Caco-2 (cell line): ENCODE measurements at regions of chr18 and their contacts with region 1.

Region 1: GRCh38 chr18:812376-813171 is 532 bp upstream of the YES1 start:
- DNase-seq: peak; percentile 90 to 94
- H3K4me3 ChIP-seq: peak overlapping the region; percentile 79
- H3K4me3 Mint-ChIP-seq: peak overlapping the region; percentile 96
- H3K27ac Mint-ChIP-seq: peak overlapping the region; percentile 94
- H3K4me1 ChIP-seq: 0 out of 2 replicates have a peak, but pooled peaks cover 4% of the 10 kb centered on the region
- H3K4me1 Mint-ChIP-seq: peaks cover 6% of the 10 kb centered on the region
- H3K27me3 ChIP-seq: no peaks in the 10 kb centered on the region
- H3K27me3 Mint-ChIP-seq: no peaks in the 10 kb centered on the region
- CTCF ChIP-seq: no peak

Region 2: GRCh38 chr18:741931-742512 is 70.6 kb before region 1 on chr18:
- CTCF ChIA-PET with region 1: no interaction called
- POLR2A ChIA-PET with region 1: no interaction called
- intact Hi-C with region 1: loop called (anchors 1 kb)
- DNase-seq: peak in 1 of 2 experiments; percentile 20
- H3K4me3 ChIP-seq: no peak overlapping the region
- H3K4me3 Mint-ChIP-seq: no peak overlapping the region
- H3K27ac Mint-ChIP-seq: no peak overlapping the region
- H3K4me1 ChIP-seq: no peaks in the 10 kb centered on the region
- H3K4me1 Mint-ChIP-seq: no peaks in the 10 kb centered on the region
- H3K27me3 ChIP-seq: no peaks in the 10 kb centered on the region
- H3K27me3 Mint-ChIP-seq: no peaks in the 10 kb centered on the region
- CTCF ChIP-seq: peak; percentile 69 to 80

Region 3: DNA sequence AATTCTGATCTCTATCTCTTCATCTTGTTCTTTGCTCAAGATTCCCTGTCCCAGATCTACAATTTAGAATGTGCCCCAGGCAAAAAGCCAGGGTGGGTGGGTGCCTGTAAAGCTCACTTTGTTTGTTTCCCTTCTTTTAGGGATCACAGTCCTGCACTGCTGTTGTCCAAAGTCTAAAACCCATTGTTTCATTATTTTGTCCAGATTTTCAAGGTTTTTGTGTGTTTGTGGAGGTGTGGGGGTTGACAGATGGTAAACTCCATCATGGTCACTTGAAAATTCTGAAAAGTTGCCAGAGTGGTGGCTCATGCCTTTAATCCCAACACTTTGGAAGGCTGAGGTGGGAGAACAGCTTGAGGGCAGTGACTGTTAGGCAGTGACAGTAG is 42.0 kb before region 1 on chr18:
- CTCF ChIA-PET with region 1: no interaction called
- POLR2A ChIA-PET with region 1: no interaction called
- intact Hi-C with region 1: loop called (anchors 1 kb)
- DNase-seq: peak; percentile 66 to 72
- H3K4me3 ChIP-seq: no peak overlapping the region
- H3K4me3 Mint-ChIP-seq: peak overlapping the region; percentile 55
- H3K27ac Mint-ChIP-seq: peak overlapping the region; percentile 56
- H3K4me1 ChIP-seq: peaks cover 51% of the 10 kb centered on the region
- H3K4me1 Mint-ChIP-seq: peaks cover 35% of the 10 kb centered on the region
- H3K27me3 ChIP-seq: no peaks in the 10 kb centered on the region
- H3K27me3 Mint-ChIP-seq: no peaks in the 10 kb centered on the region
- CTCF ChIP-seq: no peak

Region 4: GRCh38 chr18:830315-830901 is 17.8 kb after region 1 on chr18:
- CTCF ChIA-PET with region 1: interaction called, 6 read pairs
- POLR2A ChIA-PET with region 1: no interaction called
- intact Hi-C with region 1: loop called (anchors 2 kb)
- DNase-seq: no peak
- H3K4me3 ChIP-seq: no peak overlapping the region
- H3K4me3 Mint-ChIP-seq: no peak overlapping the region
- H3K27ac Mint-ChIP-seq: no peak overlapping the region
- H3K4me1 ChIP-seq: peaks cover 10% of the 10 kb centered on the region; the same call in 1 of the 2 replicates
- H3K4me1 Mint-ChIP-seq: peaks cover 9% of the 10 kb centered on the region
- H3K27me3 ChIP-seq: no peaks in the 10 kb centered on the region
- H3K27me3 Mint-ChIP-seq: no peaks in the 10 kb centered on the region
- CTCF ChIP-seq: no peak